Common myeloid progenitor, CD34-positive (primary cell): ENCODE measurements at regions of chr3 and their contacts with region 1.

Region 1: DNA sequence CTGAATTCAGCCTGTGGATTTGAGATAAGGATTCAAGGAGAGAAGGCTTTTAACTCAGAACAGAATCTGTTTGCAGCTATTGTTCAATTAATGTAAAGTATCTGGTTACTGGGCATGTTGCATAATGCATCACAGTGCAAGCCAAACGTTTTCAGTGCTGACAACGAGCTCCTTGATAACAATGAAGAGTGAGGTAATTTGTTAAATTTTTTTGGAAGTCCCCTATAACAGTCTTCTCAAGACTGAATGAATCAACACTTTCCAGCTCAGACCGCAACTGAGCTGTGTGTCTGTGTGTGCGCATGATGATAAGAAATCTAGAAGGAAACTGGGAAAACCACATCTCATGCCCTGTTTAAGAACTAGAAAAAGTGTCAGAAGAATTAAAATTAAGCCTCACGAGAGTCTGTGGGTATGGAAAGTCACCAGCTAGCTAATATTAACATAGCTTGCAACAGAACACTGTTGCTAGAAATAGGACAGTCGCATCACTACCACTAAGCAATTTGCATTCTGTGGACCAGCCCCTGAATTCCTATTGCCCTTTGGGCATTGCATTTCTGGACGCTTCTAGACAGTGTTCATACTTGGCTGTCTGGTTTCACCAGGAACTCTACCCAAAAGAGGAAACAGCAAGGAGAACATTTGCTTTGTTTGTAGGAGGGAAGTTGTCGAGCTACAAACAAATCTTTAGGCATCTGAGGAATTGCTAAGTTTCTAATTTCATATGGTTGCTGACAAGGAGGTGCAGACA is 43.7 kb upstream of the ATP2C1 start:
- DNase-seq: peak; percentile 99 to 100 (median 99)
- H3K4me3 ChIP-seq: peak overlapping the region in 6 of 7 experiments; percentile 77 to 100 (median 91)
- H3K27ac ChIP-seq: peak overlapping the region; percentile 100
- H3K4me1 ChIP-seq: peaks cover 17 to 65% (median 45%) of the 10 kb centered on the region in 4 experiments
- H3K27me3 ChIP-seq: no peaks in the 10 kb centered on the region

Region 2: DNA sequence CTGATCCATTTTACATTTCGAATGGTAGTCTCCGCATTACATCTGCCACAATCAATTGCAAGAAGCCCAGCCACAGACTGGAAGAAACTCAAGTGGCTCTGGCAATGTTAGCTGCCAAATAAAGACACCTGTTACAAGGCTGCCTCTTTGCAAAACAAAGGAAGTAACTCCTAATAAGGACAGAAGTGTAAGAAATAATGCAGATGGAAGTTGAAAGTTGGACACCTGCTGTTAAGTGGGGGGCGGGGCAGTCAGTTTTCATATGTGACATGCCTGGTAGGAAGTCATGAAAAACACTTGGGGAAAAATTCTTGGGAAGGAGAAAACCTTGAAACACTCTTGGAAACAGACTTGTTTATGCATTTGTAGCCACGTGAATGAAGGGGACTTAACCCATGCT is 10.4 kb before region 1 on chr3:
- CTCF ChIA-PET with region 1: interaction called, 14 read pairs
- POLR2A ChIA-PET with region 1: interaction called, 7 read pairs
- DNase-seq: peak in 2 of 3 donors; percentile 67 to 79
- H3K4me3 ChIP-seq: peak overlapping the region in 3 of 7 experiments; percentile 28 to 56 (median 56)
- H3K27ac ChIP-seq: no peak overlapping the region
- H3K4me1 ChIP-seq: peaks cover 14 to 27% (median 19%) of the 10 kb centered on the region in 4 experiments
- H3K27me3 ChIP-seq: no peaks in the 10 kb centered on the region